Gastrocnemius medialis (tissue), 4 donors: ENCODE measurements at regions of chr22 and their contacts with region 1.

Region 1: GRCh38 chr22:28051787-28052356 is 132.8 kb upstream of the PITPNB start:
- DNase-seq: peak in 1 of 2 donors; percentile 62
- ATAC-seq: peak in 1 of 2 donors; percentile 72
- H3K4me3 ChIP-seq: no peak overlapping the region
- H3K27ac ChIP-seq: no peak overlapping the region
- H3K4me1 ChIP-seq: peaks cover 0 to 7% of the 10 kb centered on the region in 2 donors
- H3K27me3 ChIP-seq: no peaks in the 10 kb centered on the region
- CTCF ChIP-seq: peak; percentile 75 to 92 (median 83)
- POLR2A ChIP-seq: no peak

Region 2: DNA sequence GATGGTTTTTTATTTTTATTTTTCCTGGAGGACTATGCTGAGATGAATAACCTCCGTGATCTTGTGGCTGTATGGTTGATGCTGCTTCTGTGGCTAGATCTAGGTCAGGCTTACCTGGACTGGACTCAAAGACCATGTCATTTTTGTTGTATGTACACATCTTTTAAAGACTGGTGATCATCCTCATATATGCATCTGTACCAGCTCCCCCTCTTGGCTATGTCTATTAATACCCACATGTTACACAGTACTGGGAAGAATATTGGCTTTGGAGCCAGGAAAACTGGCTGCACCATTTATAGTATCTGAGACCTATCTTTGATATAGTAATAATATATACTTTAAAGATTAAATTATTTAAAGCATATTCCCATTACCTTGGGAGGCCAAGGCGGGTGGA is 114.4 kb before region 1 on chr22:
- in situ Hi-C with region 1: no loop called
- intact Hi-C with region 1: no loop called
- DNase-seq: no peak
- ATAC-seq: no peak
- H3K4me3 ChIP-seq: no peak overlapping the region
- H3K27ac ChIP-seq: no peak overlapping the region
- H3K4me1 ChIP-seq: no peaks in the 10 kb centered on the region
- H3K27me3 ChIP-seq: no peaks in the 10 kb centered on the region
- CTCF ChIP-seq: no peak
- POLR2A ChIP-seq: no peak

Region 3: DNA sequence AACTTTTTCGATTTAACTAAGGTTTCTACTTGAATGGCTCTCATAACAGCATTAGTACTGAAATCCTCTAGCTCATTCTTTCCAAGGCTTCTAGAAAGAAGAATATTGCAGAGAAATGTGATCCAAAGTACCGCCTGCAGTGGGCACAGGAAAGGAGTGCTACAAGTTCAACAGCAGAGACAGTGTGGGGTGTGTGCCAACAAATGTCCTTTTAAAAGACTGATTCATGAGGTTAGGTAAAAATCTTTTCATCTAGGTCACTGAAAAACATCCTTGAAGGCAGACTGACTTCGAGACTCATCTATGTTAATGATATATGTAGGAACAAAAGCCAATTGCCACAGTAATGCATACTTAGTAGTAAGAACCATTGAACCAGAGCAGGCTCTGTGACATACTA is 216.3 kb after region 1 on chr22:
- in situ Hi-C with region 1: no loop called
- intact Hi-C with region 1: loop called (anchors 10 kb)
- DNase-seq: peak in 1 of 2 donors; percentile 21
- ATAC-seq: peak; percentile 48 to 55
- H3K4me3 ChIP-seq: peak overlapping the region in 2 of 4 donors; percentile 1 to 30
- H3K27ac ChIP-seq: peak overlapping the region; percentile 24 to 76 (median 58)
- H3K4me1 ChIP-seq: peaks cover 26 to 35% of the 10 kb centered on the region in 2 donors
- H3K27me3 ChIP-seq: no peaks in the 10 kb centered on the region
- CTCF ChIP-seq: no peak
- POLR2A ChIP-seq: no peak

Region 4: DNA sequence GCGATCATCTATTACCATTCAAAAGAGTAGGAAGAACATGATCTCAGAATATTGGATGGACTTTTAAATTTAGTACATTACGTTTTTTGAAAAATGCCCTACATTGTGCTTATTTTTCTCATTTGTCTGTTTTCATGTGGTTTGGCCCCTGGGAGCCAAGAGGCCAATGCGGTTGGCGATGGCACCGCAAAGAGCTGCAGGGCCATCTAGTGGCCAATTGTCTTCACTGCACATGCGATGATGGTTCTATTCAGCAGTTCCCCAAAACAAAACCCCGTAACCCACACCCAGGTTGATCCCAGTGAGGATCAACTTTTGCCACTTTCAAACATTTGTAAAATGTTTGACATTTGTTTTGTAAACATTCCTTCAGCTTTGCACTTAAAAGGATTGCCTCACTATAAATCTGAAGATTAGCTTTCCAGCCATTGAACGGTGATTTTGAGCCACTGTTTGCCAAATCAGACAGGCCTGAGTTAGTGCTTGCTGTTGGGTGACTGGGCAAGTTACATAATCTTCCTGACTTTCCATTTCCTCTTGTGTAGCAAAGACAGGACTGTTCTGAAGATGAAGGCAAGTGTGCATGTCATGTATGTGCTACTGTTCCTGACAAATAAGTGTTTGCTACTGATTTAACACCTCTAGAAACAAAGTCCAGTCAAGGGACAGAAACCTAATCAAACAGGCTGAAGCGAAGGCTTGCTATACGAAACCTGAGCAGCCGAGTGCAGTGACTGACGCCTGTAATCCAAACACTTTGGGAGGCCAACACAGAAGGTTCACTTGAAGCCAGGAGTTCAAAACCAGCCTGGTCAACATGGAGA is 777.7 kb after region 1 on chr22:
- in situ Hi-C with region 1: loop called (anchors 10 to 25 kb)
- intact Hi-C with region 1: no loop called
- DNase-seq: peak; percentile 44 to 59
- ATAC-seq: peak; percentile 79 to 86
- H3K4me3 ChIP-seq: no peak overlapping the region
- H3K27ac ChIP-seq: no peak overlapping the region
- H3K4me1 ChIP-seq: no peaks in the 10 kb centered on the region
- H3K27me3 ChIP-seq: no peaks in the 10 kb centered on the region
- CTCF ChIP-seq: peak; percentile 92 to 98 (median 98)
- POLR2A ChIP-seq: no peak